ENCODE measurements at regions of chr14 and their contacts with region 1.

Region 1: GRCh38 chr14:20597103-20597502 is 5.9 kb upstream of the RNASE12 start:
- DNase-seq: no peak
- H3K4me3 ChIP-seq: no peak overlapping the region
- H3K27ac ChIP-seq: no peak overlapping the region
- H3K4me1 ChIP-seq: no peaks in the 10 kb centered on the region
- H3K27me3 ChIP-seq: no peaks in the 10 kb centered on the region
- CTCF ChIP-seq: no peak
- EP300 ChIP-seq: no peak
- POLR2A ChIP-seq: no peak

Region 2: GRCh38 chr14:20522332-20522731 is 74.8 kb before region 1 on chr14:
- in situ Hi-C with region 1: loop called in 1 of 4 experiments (anchors 10 kb)
- intact Hi-C with region 1: no loop called
- DNase-seq: no peak
- H3K4me3 ChIP-seq: no peak overlapping the region
- H3K27ac ChIP-seq: no peak overlapping the region
- H3K4me1 ChIP-seq: no peaks in the 10 kb centered on the region
- H3K27me3 ChIP-seq: no peaks in the 10 kb centered on the region
- CTCF ChIP-seq: no peak
- EP300 ChIP-seq: no peak
- POLR2A ChIP-seq: no peak

Region 3: DNA sequence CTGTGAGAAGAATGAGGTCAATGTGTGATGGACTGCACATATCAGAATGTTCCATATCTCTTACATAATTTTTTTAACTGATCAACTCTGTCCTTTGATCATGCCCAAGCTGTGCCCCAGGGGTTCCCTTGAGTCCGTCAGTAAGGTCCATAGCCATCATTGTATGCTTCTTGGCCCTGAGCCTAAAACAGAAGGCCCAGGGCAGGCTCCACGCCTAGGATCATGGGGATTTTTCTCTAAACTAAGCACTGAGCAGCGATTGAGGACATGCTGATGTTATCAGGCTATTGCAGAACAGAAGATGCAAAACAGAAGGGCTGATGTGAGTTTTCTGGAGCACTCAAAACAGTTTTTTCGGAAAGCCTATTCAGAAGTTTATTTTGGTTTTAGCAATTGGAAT is 57.2 kb before region 1 on chr14:
- in situ Hi-C with region 1: loop called in 1 of 4 experiments (anchors 10 kb)
- intact Hi-C with region 1: no loop called
- DNase-seq: no peak
- H3K4me3 ChIP-seq: no peak overlapping the region
- H3K27ac ChIP-seq: no peak overlapping the region
- H3K4me1 ChIP-seq: no peaks in the 10 kb centered on the region
- H3K27me3 ChIP-seq: no peaks in the 10 kb centered on the region
- CTCF ChIP-seq: no peak
- EP300 ChIP-seq: no peak
- POLR2A ChIP-seq: no peak

Region 4: DNA sequence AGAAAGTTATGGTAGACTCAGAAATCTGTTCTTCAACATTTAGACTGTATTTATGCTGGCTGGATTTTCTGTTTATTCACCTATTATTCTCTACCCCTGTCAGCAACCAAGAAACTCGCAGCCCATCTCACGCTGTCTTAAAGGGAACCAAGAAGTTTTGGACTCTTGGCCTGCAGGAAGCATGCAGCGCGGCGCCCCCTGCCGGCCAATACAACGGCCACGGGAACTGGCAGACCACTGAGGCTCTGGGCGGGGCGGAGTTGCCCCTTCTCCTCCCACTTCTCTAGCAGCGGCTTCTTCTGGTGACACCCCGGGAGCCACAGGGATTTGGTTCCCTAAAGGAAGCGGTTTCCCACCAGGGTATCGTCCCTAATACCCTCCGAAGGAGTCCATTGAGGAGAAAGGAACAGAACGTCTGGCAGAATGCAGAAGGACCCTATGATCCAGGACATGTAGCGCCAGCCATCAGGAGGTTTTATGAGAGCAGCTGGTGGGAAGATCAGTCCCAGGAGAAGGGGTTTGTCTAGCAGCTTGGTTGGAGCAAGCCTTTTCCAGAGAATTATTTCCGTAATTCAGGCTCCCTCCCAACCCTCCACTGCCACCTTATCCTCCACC is 337.2 kb after region 1 on chr14:
- in situ Hi-C with region 1: no loop called
- intact Hi-C with region 1: no loop called
- DNase-seq: peak; percentile 8
- H3K4me3 ChIP-seq: no peak overlapping the region
- H3K27ac ChIP-seq: no peak overlapping the region
- H3K4me1 ChIP-seq: no peaks in the 10 kb centered on the region
- H3K27me3 ChIP-seq: no peaks in the 10 kb centered on the region
- CTCF ChIP-seq: peak in 1 of 5 experiments; percentile 12
- EP300 ChIP-seq: no peak
- POLR2A ChIP-seq: no peak